Vagina (tissue), 2 donors: ENCODE measurements at regions of chr3 and their contacts with region 1.

Region 1: DNA sequence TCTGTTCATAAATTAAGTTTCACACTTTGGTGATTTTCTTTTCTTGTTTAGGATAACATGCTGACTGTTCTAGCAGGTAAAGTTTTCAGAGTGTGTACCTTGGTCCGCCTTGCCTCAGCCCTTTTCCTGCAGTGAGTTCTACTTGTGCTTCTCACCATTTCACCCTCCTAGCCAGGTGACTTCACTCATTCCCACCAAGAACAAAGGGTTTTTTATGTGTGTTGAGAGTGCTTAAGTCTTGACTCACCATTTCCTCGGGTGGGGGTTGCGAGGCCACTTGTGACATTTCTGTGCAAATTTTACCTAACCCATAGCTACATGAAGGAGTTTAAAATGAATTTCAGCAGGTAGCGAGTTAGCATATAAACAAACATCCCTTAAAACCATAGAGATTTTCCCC is 81.4 kb downstream of the C3orf38 start:
- DNase-seq: no peak
- H3K4me3 ChIP-seq: no peak overlapping the region
- H3K27ac ChIP-seq: no peak overlapping the region
- H3K4me1 ChIP-seq: no peaks in the 10 kb centered on the region
- H3K27me3 ChIP-seq: no peaks in the 10 kb centered on the region
- CTCF ChIP-seq: no peak
- POLR2A ChIP-seq: no peak

Region 2: DNA sequence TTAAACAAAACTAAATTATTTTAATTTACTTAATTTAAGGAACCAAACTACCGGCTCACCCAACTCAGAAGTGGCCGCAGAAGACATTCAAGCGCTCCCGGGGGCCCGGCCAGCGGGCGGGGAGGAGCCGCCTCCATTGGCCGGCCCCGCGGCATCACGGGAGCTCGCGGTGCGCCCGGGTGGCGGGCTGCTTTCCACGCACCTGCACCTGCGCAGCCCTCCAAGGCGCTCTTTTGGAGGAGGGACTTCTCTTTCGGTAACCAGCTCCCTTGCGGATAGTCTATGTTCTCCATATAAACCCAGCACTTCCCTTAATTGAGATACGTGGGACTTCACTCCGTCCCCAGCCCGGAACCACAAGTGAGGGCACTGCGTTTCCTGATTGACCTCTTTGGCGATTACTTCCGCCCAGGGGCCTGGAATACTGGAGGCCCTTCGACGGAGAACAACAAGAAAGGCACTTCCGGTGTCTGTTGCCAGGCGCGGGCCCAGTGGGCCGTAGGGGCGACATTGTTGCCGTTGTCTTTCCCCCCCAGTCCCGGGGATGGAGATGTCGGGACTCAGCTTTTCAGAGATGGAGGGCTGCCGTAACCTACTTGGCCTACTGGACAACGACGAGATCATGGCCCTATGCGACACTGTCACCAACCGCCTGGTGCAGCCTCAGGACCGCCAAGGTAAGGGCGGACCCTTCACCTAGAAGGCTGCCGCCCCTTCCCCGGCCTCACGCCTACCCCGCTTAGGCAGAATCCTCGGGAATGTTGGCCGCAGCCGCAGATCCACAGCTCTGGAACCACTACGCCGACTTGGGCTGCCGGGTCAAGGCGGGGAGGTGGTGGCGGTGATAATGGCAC is 81.5 kb before region 1 on chr3 and contains the start of gene C3orf38:
- intact Hi-C with region 1: no loop called
- DNase-seq: peak in 1 of 2 donors; percentile 90
- H3K4me3 ChIP-seq: peak within 1 kb of the TSS; percentile 67 to 76
- H3K27ac ChIP-seq: peak within 1 kb of the TSS; percentile 90
- H3K4me1 ChIP-seq: peaks cover 52% of the 10 kb centered on the region
- H3K27me3 ChIP-seq: no peaks in the 10 kb centered on the region
- CTCF ChIP-seq: no peak
- POLR2A ChIP-seq: no peak
- total RNA-seq, gene C3orf38: 16.0 TPM

Region 3: DNA sequence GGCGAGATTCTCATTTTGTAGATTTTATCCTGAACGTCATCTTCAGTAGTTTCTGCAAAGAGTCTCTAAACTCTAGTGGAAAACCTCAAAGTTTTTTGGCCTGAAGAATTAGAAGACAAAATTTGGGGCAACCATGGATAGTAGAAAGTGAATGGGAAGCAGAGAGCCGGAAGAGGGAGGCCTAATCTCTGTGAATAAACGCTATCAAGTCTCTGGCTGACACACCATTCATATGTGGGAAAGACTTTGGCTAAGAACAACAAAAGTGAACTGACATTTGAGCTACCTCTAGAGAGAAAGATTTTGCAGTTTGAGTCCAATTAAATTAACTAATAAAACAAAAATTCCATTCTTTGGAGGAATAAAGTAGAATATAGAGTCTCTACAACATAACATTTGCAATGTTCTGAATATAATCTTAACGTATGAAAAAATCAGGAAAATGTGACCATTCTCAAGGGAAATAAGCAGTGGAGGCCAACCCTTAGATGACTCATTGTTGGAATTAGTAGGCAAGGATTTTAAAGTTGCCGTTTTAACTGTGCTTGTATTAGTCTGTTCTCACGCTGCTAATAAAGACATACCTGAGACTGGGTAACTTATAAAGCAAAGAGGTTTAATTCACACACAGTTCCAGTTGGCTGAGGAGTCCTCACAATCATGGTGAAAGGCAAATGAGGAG is 103.1 kb after region 1 on chr3:
- intact Hi-C with region 1: no loop called
- DNase-seq: no peak
- H3K4me3 ChIP-seq: no peak overlapping the region
- H3K27ac ChIP-seq: no peak overlapping the region
- H3K4me1 ChIP-seq: no peaks in the 10 kb centered on the region
- H3K27me3 ChIP-seq: no peaks in the 10 kb centered on the region
- CTCF ChIP-seq: no peak
- POLR2A ChIP-seq: no peak

Region 4: GRCh38 chr3:88773766-88774165 is 542.6 kb after region 1 on chr3:
- intact Hi-C with region 1: no loop called
- DNase-seq: no peak
- H3K4me3 ChIP-seq: no peak overlapping the region
- H3K27ac ChIP-seq: no peak overlapping the region
- H3K4me1 ChIP-seq: no peaks in the 10 kb centered on the region
- H3K27me3 ChIP-seq: no peaks in the 10 kb centered on the region
- CTCF ChIP-seq: no peak
- POLR2A ChIP-seq: no peak

Region 5: DNA sequence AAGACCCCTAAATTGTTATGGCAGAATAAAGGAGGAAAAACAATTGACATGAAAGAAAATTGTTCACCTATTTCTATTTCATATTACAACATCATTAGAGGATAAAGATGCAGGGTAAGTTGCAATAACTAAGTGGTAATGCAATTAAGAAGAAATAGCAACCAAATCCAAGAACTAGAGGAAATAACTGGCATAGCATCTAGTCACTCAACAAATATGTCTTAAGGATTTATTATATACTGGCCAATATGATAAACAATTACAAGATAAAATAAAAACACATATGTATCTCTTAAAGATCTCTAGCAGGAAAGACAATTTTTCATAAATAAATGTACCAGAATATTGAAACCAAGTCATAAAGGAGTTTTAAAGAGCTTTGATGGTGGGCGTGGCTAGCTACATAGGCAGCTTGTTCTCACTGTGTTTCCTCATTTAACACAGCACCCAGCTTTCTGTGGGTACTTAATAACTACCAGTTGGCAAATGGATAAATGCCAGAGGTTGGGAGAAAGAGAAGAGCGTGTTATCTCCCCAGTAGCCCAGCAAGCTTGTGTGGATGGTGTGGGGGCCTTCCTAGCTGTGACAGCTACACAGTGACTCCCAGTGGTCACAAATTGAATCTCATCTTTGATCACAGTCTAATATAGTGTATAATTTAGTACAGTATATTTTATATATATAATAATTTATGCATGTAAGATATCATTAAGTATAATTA is 1860.2 kb after region 1 on chr3:
- intact Hi-C with region 1: loop called (anchors 10 kb)
- DNase-seq: no peak
- H3K4me3 ChIP-seq: no peak overlapping the region
- H3K27ac ChIP-seq: no peak overlapping the region
- H3K4me1 ChIP-seq: no peaks in the 10 kb centered on the region
- H3K27me3 ChIP-seq: no peaks in the 10 kb centered on the region
- CTCF ChIP-seq: peak in 2 of 3 experiments; percentile 36 to 55
- POLR2A ChIP-seq: no peak